Activated CD4-positive, alpha-beta memory T cell treated with anti-CD3 and anti-CD28 coated beads for 36 hours (primary cell): ENCODE measurements at regions of chrX and their contacts with region 1.

Region 1: DNA sequence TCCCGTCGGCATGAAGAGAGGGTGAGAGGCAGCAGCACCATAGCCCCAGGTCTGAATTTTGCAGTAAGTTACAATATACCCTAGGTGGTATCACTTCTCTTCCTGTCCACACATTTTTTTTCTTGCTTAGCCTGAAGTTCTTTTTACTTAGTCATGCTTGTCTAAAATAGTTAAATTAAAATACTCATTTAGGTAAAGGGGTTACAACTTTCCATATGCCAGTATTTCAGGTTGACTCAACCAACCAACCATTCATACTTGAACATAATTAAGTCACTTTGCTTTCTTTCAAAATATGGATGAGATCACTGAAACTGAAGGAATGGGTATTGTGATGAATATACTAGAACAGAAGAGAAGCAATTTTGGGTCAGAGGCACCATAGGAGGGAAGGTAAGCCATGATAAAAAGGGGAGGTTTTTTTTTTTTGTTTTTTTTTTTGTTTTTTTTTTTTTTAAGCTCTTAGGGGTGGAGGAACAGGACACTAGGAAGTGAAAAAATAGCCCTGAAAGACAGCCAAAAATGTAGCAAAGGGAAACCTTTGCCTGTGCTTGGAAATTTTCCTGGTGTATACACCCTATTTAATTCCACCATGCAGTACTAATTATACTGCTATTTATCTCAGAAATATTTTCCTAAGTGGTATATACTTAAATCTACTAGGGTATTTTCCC is 41.8 kb downstream of the RPS6KA3 start:
- DNase-seq: peak; percentile 22
- H3K4me3 Mint-ChIP-seq: no peak overlapping the region
- H3K27ac Mint-ChIP-seq: peak overlapping the region; percentile 55
- H3K4me1 Mint-ChIP-seq: peaks cover 53% of the 10 kb centered on the region
- H3K27me3 Mint-ChIP-seq: no peaks in the 10 kb centered on the region

Region 2: DNA sequence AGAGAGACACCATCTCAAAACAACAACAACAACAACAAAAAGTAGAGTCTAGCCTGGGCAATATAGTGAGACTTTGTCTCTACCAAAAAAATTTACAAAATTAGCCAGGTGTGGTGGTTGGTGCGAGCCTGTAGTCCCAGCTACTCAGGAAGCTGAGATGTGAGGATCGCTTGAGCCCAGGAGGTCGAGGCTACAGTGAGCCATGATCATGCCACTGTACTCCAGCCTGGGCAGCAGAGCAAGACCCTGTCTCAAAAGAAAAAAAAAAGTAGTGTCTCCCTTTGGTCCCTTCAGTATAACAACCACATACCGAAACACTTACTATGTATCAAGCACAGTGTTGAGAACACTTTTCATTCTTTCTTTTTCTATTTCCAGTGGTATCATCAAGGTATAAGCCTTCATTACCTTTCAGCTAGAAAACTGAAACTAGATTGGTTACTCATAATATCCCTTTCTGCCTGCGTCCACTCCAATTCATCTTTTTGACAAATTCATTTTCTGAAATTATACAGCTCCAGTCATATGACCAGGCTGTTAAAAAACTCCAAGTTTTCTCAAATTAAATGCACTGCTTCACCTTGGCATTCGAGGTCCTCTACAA is 12.4 kb before region 1 on chrX:
- CTCF ChIA-PET with region 1: no interaction called
- POLR2A ChIA-PET with region 1: no interaction called
- intact Hi-C with region 1: loop called (anchors 1 kb)
- DNase-seq: no peak
- H3K4me3 Mint-ChIP-seq: no peak overlapping the region
- H3K27ac Mint-ChIP-seq: peak overlapping the region; percentile 28
- H3K4me1 Mint-ChIP-seq: peaks cover 54% of the 10 kb centered on the region
- H3K27me3 Mint-ChIP-seq: no peaks in the 10 kb centered on the region

Region 3: GRCh38 chrX:20237864-20238263 is 12.9 kb after region 1 on chrX:
- CTCF ChIA-PET with region 1: no interaction called
- POLR2A ChIA-PET with region 1: no interaction called
- intact Hi-C with region 1: loop called (anchors 1 kb)
- DNase-seq: no peak
- H3K4me3 Mint-ChIP-seq: no peak overlapping the region
- H3K27ac Mint-ChIP-seq: peak overlapping the region; percentile 69
- H3K4me1 Mint-ChIP-seq: peaks cover 41% of the 10 kb centered on the region
- H3K27me3 Mint-ChIP-seq: no peaks in the 10 kb centered on the region

Region 4: GRCh38 chrX:20252381-20253231 is 27.7 kb after region 1 on chrX:
- CTCF ChIA-PET with region 1: interaction called, 4 read pairs
- POLR2A ChIA-PET with region 1: no interaction called
- intact Hi-C with region 1: loop called (anchors 2 kb)
- DNase-seq: peak; percentile 78
- H3K4me3 Mint-ChIP-seq: peak overlapping the region; percentile 23
- H3K27ac Mint-ChIP-seq: peak overlapping the region; percentile 88
- H3K4me1 Mint-ChIP-seq: peaks cover 52% of the 10 kb centered on the region
- H3K27me3 Mint-ChIP-seq: no peaks in the 10 kb centered on the region

Region 5: DNA sequence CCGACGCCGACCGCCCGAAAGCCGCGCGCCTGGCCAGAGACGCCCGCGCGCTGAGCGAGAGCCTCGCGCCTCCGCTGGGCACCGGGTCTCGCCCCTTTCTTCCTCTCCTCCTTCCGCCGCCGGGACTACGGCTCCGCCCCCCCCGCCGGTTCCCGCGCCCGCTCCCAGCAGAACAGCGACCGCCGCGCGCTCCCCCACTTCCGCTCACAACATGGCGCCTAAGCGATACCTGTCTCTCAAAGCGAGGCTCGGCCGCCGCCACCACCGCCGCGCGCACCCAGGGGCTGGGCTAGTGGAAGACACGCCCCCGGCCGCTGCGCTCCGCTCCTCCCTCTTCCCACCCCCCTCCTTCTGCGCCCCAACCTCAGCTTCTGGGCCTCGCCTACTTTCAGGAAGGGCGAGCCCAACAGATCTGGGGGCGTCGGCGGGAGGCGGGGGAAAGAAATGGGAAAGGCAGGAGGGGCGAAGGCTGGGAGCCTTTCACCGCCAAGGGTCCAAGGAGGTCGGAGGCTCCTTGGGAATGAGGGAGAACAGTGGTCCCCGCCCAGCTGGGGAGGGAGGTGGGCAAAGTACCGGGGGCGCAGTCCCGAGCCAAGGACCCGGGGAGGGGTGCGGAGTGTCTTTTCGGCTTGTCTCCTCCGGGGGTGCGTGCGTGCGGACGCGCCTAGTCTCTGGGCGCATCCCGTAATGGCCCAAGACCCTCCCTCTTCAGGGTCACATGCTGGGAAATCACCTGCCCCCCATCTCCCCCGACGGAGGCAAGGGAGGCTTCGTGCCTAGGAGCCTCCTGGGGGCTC is 42.1 kb after region 1 on chrX and contains the start of gene RPS6KA3:
- CTCF ChIA-PET with region 1: no interaction called
- POLR2A ChIA-PET with region 1: no interaction called
- intact Hi-C with region 1: loop called (anchors 1 kb)
- DNase-seq: peak; percentile 93
- H3K4me3 Mint-ChIP-seq: peak within 1 kb of the TSS; percentile 95
- H3K27ac Mint-ChIP-seq: peak within 1 kb of the TSS; percentile 99
- H3K4me1 Mint-ChIP-seq: peaks cover 18% of the 10 kb centered on the region
- H3K27me3 Mint-ChIP-seq: no peaks in the 10 kb centered on the region
- total RNA-seq, gene RPS6KA3: 51.8 to 52.0 TPM

Region 6: GRCh38 chrX:20399728-20400414 is 174.9 kb after region 1 on chrX:
- CTCF ChIA-PET with region 1: no interaction called
- POLR2A ChIA-PET with region 1: no interaction called
- intact Hi-C with region 1: loop called (anchors 1 kb)
- DNase-seq: peak; percentile 16
- H3K4me3 Mint-ChIP-seq: no peak overlapping the region
- H3K27ac Mint-ChIP-seq: no peak overlapping the region
- H3K4me1 Mint-ChIP-seq: peaks cover 7% of the 10 kb centered on the region
- H3K27me3 Mint-ChIP-seq: no peaks in the 10 kb centered on the region

Region 7: DNA sequence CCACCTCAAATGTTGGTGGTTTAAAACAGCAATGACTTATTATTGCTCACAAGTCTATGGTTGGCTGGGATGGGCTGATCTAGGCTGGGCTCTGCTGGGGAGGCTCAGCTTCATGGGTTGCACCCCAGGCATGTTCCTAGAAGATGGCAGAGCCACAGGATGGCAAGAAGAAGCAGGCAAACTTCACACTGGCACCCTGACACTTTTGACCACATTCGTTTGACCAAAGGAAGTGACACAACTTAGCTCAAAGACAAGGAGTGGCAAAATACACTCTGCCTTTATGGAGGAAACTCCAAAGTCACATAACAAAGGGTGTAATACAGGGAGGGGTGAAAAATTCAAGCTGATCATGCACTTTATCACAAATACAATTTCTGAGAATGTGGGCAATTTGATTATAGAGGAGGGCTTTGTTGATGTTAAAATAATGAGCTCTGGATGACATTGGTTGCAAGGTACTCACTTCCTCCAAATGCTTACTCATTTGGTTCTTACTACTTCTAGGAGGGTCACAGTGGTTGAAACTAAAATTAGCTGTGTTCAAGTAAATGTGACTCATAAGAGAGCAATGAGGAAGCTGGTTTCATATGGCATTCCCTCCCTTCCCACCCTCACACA is 291.0 kb after region 1 on chrX:
- CTCF ChIA-PET with region 1: no interaction called
- POLR2A ChIA-PET with region 1: no interaction called
- intact Hi-C with region 1: loop called (anchors 2 kb)
- DNase-seq: peak; percentile 37
- H3K4me3 Mint-ChIP-seq: no peak overlapping the region
- H3K27ac Mint-ChIP-seq: peak overlapping the region; percentile 58
- H3K4me1 Mint-ChIP-seq: peaks cover 34% of the 10 kb centered on the region
- H3K27me3 Mint-ChIP-seq: peaks cover 13% of the 10 kb centered on the region